Activated naive CD4-positive, alpha-beta T cell treated with anti-CD3 and anti-CD28 coated beads for 36 hours (primary cell): ENCODE measurements at regions of chr1 and their contacts with region 1.

Region 1: DNA sequence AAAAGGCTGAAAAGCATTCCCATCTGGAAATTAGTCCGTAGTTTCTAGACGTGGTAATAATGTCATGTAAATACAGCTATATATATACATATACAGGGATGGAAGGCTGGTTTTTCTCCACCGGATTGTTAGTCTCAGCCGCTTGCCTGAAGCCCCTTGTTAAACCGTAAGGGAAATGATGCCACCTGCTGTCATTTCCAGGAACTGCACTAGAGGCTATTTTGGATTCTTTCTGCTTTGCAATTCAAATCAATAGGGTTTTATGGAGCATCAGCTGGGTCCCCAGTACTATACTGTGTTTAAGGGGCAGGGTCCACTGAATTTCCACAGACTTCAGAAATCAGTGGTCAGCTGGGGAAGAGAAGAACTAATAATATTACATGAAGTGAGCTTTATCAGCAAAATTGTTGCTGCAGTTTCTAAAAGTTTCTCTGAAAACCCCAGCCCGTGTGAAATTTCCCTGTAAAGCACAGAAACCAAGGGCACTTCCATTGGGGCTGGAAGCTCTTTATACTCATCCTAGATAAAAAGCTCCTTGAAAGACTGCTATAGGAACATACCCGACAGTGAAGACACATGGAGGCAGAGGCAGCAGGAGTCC is 33.8 kb upstream of the MPZL1 start:
- DNase-seq: peak; percentile 94
- H3K4me3 Mint-ChIP-seq: no peak overlapping the region
- H3K27ac Mint-ChIP-seq: peak overlapping the region; percentile 62
- H3K4me1 Mint-ChIP-seq: peaks cover 11% of the 10 kb centered on the region
- H3K27me3 Mint-ChIP-seq: no peaks in the 10 kb centered on the region

Region 2: DNA sequence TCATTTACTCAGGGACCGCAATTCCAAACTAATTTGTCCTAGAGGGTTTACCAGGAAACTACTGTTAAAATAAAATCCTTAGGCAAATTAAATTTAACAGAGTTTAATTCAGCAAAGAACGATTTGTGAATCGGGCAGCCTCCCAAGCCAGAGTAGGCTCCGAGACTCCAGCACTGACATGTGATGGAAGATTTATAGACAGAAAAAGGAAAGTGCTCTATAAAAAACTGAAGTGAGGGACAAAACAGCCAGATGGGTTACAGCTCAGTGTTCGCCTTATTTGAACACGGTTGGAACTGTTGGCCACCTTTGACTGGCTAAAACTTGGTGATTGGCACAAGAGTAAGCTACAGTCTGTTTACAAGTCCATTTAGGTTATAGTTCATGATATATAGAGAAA is 93.2 kb before region 1 on chr1:
- CTCF ChIA-PET with region 1: interaction called, 148 read pairs
- intact Hi-C with region 1: loop called (anchors 1 kb)
- DNase-seq: no peak
- H3K4me3 Mint-ChIP-seq: no peak overlapping the region
- H3K27ac Mint-ChIP-seq: no peak overlapping the region
- H3K4me1 Mint-ChIP-seq: peaks cover 4% of the 10 kb centered on the region
- H3K27me3 Mint-ChIP-seq: no peaks in the 10 kb centered on the region

Region 3: GRCh38 chr1:167635156-167635648 is 52.8 kb before region 1 on chr1:
- CTCF ChIA-PET with region 1: interaction called, 43 read pairs
- intact Hi-C with region 1: loop called (anchors 1 kb)
- DNase-seq: peak; percentile 2
- H3K4me3 Mint-ChIP-seq: no peak overlapping the region
- H3K27ac Mint-ChIP-seq: peak overlapping the region; percentile 60
- H3K4me1 Mint-ChIP-seq: peaks cover 73% of the 10 kb centered on the region
- H3K27me3 Mint-ChIP-seq: no peaks in the 10 kb centered on the region

Region 4: DNA sequence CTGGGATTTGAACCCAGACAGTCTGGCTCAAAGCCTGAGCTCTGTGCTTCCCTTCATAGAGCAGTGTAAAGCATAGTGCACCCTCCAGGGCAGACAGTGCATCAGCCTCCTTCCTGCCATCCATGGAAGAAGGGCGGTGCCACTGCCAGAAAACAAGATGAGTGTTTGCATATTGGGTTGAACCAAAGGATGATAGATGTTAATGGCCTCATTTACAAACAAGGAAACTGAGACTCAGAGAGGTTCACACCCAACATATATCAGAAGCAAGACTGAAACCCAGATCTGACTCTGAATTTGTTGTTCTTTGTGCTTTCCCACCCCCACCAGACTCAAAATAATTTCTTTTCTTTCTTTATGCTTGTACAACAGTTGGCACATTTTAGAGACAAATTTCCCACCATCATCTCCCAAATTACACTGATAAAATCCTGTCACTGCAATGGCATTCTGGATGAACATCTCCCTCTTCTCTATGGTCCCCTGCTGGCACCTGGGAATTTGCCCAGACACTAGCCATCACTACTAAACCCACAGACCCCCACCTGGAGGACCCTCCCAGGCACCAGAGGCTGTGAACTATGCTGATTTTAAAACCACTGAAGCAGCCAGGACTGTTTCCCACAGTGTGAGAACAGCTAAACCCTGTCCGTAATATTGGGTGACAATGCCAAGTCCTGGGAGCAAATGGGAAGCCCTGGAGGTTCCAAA is 11.7 kb before region 1 on chr1:
- CTCF ChIA-PET with region 1: interaction called, 26 read pairs
- intact Hi-C with region 1: no loop called
- DNase-seq: peak; percentile 70
- H3K4me3 Mint-ChIP-seq: no peak overlapping the region
- H3K27ac Mint-ChIP-seq: peak overlapping the region; percentile 42
- H3K4me1 Mint-ChIP-seq: peaks cover 35% of the 10 kb centered on the region
- H3K27me3 Mint-ChIP-seq: no peaks in the 10 kb centered on the region